ENCODE measurements at regions of chr2 and their contacts with region 1.

Region 1: DNA sequence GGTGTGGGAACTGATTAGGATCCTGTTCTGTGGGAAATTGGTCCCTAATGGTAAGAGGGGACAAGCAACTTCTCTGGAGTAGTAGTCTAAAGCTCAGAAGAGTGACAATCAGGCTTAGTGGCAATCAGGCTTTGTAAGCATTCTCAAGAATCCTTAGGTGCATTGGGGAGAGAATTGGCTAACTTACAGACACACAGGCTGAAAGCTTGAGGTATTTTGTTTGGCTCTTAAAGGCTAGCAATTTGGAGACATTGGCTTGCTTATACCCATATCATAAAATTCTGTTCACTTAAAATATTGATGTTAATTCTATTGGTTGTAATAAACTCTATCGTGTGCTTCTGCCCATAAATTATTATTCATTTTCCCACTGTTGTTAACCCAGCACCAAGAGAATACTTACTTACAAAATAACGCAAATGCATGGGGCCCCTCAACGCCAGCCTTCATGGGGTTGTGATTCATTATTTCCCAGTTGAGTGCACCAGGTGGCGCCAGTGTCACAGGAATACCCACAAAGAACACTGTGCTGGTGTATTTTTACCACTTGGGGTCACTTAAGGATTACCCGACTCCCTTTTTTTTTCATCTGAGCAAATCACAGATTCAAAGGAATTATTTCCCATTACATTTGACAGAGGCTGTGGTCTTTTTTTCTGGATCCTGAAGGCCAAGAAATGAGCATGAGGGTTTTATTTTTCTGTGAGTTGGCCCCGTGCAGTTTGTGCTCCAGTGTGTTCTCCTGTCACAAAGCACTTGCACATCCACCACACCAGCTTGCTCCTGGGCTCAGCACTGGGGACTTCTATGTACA is 45.5 kb downstream of the DDX1 start:
- DNase-seq: peak; percentile 31 to 80
- H3K4me3 ChIP-seq: no peak overlapping the region
- H3K27ac ChIP-seq: no peak overlapping the region
- H3K4me1 ChIP-seq: no peaks in the 10 kb centered on the region; a peak in 1 of 7 replicates
- H3K27me3 ChIP-seq: no peaks in the 10 kb centered on the region
- CTCF ChIP-seq: peak; percentile 68 to 99 (median 92)
- EP300 ChIP-seq: no peak
- POLR2A ChIP-seq: 0 out of 3 replicates have a peak, but pooled peaks of 1 of the 2 experiments have one; percentile 26
- RAD21 ChIP-seq: peak; percentile 100

Region 2: GRCh38 chr2:15539999-15540398 is 97.2 kb before region 1 on chr2:
- CTCF ChIA-PET with region 1: no interaction called
- POLR2A ChIA-PET with region 1: no interaction called
- DNase-seq: no peak
- H3K4me3 ChIP-seq: no peak overlapping the region
- H3K27ac ChIP-seq: no peak overlapping the region
- H3K4me1 ChIP-seq: no peaks in the 10 kb centered on the region
- H3K27me3 ChIP-seq: no peaks in the 10 kb centered on the region
- CTCF ChIP-seq: no peak
- EP300 ChIP-seq: no peak
- POLR2A ChIP-seq: no peak
- RAD21 ChIP-seq: no peak

Region 3: GRCh38 chr2:15554525-15555218 is 82.5 kb before region 1 on chr2:
- CTCF ChIA-PET with region 1: no interaction called
- POLR2A ChIA-PET with region 1: no interaction called
- DNase-seq: no peak
- H3K4me3 ChIP-seq: no peak overlapping the region
- H3K27ac ChIP-seq: no peak overlapping the region
- H3K4me1 ChIP-seq: no peaks in the 10 kb centered on the region
- H3K27me3 ChIP-seq: no peaks in the 10 kb centered on the region
- CTCF ChIP-seq: no peak
- EP300 ChIP-seq: no peak
- POLR2A ChIP-seq: no peak
- RAD21 ChIP-seq: no peak

Region 4: GRCh38 chr2:15599994-15600393 is 37.2 kb before region 1 on chr2:
- CTCF ChIA-PET with region 1: no interaction called
- POLR2A ChIA-PET with region 1: no interaction called
- DNase-seq: no peak
- H3K4me3 ChIP-seq: no peak overlapping the region
- H3K27ac ChIP-seq: no peak overlapping the region
- H3K4me1 ChIP-seq: no peaks in the 10 kb centered on the region
- H3K27me3 ChIP-seq: no peaks in the 10 kb centered on the region
- CTCF ChIP-seq: no peak
- EP300 ChIP-seq: no peak
- POLR2A ChIP-seq: no peak
- RAD21 ChIP-seq: no peak

Region 5: DNA sequence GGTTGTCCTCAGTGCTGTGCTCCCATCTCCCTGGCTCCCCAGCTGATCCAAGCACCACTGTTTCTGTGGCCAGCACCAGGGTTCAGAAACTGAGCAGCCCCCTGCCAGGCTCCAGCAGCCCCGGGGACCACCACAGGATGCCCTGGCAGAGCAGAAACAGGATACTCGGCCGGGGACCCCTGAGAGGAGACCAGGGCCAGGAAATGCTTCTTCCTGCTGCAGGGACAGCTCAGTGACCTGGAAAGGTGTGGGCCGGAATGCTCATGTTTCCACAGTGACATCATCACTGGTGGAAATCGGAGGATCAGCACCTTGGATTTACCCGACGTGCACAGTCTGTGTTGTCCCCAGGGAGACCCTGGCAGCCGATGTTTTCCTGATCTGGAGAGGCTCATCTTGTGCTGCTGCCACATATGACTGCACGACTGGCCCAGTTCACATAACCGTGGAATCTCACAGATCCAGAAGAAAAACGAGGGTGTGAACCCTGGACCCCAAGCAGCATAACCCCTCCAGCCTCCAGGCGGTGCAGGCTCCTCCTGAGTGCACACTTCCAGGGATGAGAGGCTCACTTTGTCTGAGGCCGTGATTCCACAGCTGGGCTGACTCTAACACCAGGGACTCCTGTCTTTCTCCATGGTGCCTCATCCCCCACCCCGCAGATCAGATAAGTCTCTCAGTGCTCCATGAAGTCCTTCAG is 12.5 kb after region 1 on chr2:
- CTCF ChIA-PET with region 1: interaction called, 10 read pairs
- POLR2A ChIA-PET with region 1: interaction called, 3 read pairs
- DNase-seq: peak in 1 of 2 experiments; percentile 38
- H3K4me3 ChIP-seq: no peak overlapping the region
- H3K27ac ChIP-seq: no peak overlapping the region
- H3K4me1 ChIP-seq: no peaks in the 10 kb centered on the region; a peak in 2 of 7 replicates
- H3K27me3 ChIP-seq: no peaks in the 10 kb centered on the region
- CTCF ChIP-seq: no peak
- EP300 ChIP-seq: no peak
- POLR2A ChIP-seq: no peak
- RAD21 ChIP-seq: no peak

Region 6: DNA sequence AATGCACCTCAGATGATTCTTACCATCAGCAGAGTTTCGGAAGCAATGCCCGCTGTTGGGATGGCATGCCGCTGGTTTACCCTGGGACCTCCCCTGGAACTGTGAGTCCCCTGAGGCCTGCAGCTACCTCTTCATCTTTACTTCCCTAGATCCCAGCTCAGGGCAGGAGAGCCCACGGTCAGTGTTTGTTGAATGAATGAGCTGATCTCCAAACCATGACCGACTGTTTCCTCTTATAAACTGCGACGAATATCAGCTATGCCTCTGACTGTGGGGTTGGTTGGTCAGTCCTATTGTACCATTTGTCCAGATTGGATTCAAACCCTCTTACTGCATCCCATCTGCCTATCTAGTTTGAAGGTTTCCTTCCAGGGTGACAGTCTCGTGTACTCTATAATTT is 18.9 kb after region 1 on chr2:
- CTCF ChIA-PET with region 1: interaction called, 11 read pairs
- POLR2A ChIA-PET with region 1: interaction called, 3 read pairs
- DNase-seq: no peak
- H3K4me3 ChIP-seq: no peak overlapping the region
- H3K27ac ChIP-seq: no peak overlapping the region
- H3K4me1 ChIP-seq: no peaks in the 10 kb centered on the region; a peak in 2 of 7 replicates
- H3K27me3 ChIP-seq: no peaks in the 10 kb centered on the region
- CTCF ChIP-seq: no peak
- EP300 ChIP-seq: no peak
- POLR2A ChIP-seq: no peak
- RAD21 ChIP-seq: no peak

Region 7: DNA sequence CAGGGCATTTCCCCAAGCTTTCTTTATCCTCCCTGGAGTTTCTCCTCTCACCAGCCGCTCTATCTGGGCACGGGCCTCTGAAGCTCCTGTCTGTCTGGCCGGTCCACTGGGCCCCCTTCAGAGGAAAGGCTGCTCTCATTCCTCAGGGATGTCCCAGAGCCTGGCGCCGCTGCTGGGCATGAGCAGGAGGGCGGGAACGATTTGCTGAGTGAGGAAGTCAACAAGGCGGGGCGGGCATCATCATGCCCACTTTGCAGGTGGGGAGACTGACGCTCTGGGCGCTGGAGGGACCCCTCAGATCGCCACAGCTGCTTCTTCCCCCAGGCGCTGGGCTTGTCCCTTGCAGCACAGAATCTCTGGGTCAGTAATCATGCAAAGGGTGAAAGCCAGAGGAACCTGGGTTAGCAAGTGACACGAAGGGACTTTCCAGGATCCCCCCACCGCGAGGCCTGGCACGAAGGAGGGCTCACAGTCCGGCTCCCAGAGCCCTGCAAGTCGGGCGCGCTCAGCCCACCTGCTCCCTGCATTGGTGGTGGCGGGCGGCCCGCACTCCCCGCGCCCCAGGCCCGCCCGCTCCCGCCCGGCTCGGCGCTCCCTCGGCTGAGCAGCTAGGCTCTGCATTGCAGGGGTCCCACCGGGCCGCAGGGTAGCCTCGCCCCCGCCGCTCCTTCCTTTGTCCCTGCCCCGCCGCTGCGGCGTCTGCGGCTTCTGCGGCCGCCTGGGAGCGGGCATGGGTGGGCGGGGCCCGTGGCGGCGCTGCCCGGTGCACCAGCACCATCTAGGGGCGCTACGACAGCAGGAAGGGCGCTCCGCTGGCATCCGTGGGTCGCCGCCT is 870.7 kb after region 1 on chr2:
- CTCF ChIA-PET with region 1: interaction called, 31 read pairs
- POLR2A ChIA-PET with region 1: no interaction called
- DNase-seq: peak; percentile 27 to 82
- H3K4me3 ChIP-seq: peak overlapping the region; percentile 36 to 61 (median 39)
- H3K27ac ChIP-seq: no peak overlapping the region
- H3K4me1 ChIP-seq: peaks cover 0 to 7% (median 6%) of the 10 kb centered on the region in 4 experiments; a peak in 4 of 7 replicates
- H3K27me3 ChIP-seq: peaks cover 0 to 4% (median 0%) of the 10 kb centered on the region in 4 experiments; a peak in 2 of 7 replicates
- CTCF ChIP-seq: peak; percentile 77 to 82 (median 82)
- EP300 ChIP-seq: peak in 1 of 2 experiments; percentile 48; a peak in 1 of 3 replicates
- POLR2A ChIP-seq: no peak
- RAD21 ChIP-seq: peak; percentile 93 to 95